ENCODE measurements at regions of chr14 and their contacts with region 1.

Region 1: GRCh38 chr14:103808403-103809001 is 38.9 kb downstream of the PPP1R13B start:
- DNase-seq: peak; percentile 74
- H3K4me3 ChIP-seq: no peak overlapping the region
- H3K27ac ChIP-seq: no peak overlapping the region
- H3K4me1 ChIP-seq: peaks cover 6% of the 10 kb centered on the region
- CTCF ChIP-seq: peak; percentile 95

Region 2: DNA sequence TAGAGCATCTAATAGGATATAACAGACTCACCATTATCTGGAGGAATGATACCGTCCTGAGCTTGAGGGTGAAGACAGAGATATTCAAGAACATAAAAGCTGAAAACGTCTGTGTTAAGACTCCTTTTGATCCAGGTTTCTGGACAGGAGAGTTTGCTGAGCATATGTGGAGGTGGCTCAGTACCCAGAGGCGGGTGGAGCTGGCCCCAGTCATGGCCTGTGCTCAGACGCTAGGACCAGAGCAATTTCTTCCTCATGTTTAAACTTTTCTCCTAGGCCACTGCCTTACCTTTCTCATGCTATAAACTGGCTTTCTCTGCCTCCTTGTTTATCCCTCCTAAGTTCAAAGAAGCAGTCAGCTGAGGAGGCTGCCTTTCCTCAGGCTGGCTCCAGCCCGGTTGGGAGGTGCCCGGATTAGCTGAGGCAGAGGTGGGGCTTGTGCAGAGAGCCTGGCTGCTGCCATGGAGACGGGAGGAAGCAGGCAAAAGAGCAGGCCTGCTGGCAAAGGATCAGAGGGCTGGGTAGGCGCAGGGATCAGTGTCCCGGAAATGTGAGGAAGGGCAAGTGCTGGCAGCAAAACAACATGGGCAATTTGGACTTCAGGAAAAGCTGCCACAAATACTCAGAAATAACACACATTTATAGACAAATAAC is 232.0 kb before region 1 on chr14:
- CTCF ChIA-PET with region 1: no interaction called
- POLR2A ChIA-PET with region 1: no interaction called
- intact Hi-C with region 1: loop called (anchors 5 kb)
- DNase-seq: no peak
- H3K4me3 ChIP-seq: no peak overlapping the region
- H3K27ac ChIP-seq: no peak overlapping the region
- H3K4me1 ChIP-seq: no peaks in the 10 kb centered on the region
- CTCF ChIP-seq: no peak

Region 3: DNA sequence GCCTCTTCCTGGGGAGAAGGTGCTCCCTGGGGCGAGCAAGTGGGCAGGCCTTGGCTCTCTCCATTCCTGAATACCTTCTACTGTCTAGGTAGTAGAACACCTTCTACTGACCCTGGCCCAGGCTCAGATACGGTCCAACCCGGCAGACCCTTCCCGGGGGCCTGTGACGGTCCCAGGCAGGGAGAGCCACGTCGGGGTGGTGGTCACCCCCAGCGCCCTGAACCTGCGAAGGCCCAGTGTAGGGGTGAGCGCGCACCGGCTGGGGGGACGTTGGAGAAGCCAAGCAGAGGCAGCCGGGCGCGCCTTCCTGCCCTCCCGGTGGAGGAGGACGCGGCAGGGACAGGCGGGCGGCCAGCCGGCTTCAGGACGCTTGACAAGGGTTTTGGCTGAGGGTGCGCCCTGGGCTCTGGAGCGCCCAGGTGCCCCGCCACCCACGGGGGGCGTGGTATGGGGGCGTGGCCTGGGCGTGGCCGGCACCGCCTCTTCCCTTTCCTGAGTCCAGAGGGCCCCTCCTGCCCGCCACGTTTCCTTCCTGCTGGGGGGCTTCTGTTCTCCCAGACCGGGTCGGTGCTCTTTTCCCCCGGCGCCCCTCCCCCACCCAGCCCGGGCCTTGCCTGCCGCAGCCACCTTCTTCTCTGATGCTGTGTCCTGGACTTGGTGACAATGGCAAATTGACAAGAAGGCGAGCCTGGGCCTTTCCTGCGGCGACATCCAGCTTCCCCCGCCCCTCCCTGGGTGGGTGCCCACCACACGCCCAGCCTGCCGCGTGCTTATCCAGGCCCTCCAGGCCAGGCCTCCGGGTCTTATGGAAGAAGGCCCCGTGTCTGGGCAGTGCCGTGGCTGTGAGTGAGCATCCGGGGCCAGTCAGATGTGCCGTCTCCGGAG is 63.3 kb after region 1 on chr14:
- CTCF ChIA-PET with region 1: no interaction called
- POLR2A ChIA-PET with region 1: no interaction called
- intact Hi-C with region 1: no loop called
- DNase-seq: peak; percentile 80
- H3K4me3 ChIP-seq: peak overlapping the region; percentile 76
- H3K27ac ChIP-seq: no peak overlapping the region
- H3K4me1 ChIP-seq: peaks cover 14% of the 10 kb centered on the region
- CTCF ChIP-seq: no peak

Region 4: GRCh38 chr14:103910262-103910935 is 101.9 kb after region 1 on chr14:
- CTCF ChIA-PET with region 1: no interaction called
- POLR2A ChIA-PET with region 1: no interaction called
- intact Hi-C with region 1: loop called (anchors 1 kb)
- DNase-seq: peak; percentile 68
- H3K4me3 ChIP-seq: no peak overlapping the region
- H3K27ac ChIP-seq: no peak overlapping the region
- H3K4me1 ChIP-seq: peaks cover 8% of the 10 kb centered on the region
- CTCF ChIP-seq: peak; percentile 92

Region 5: GRCh38 chr14:103973354-103973753 is 164.9 kb after region 1 on chr14:
- CTCF ChIA-PET with region 1: no interaction called
- POLR2A ChIA-PET with region 1: no interaction called
- intact Hi-C with region 1: no loop called
- DNase-seq: no peak
- H3K4me3 ChIP-seq: no peak overlapping the region
- H3K27ac ChIP-seq: no peak overlapping the region
- H3K4me1 ChIP-seq: no peaks in the 10 kb centered on the region
- CTCF ChIP-seq: no peak

Region 6: GRCh38 chr14:103984196-103984595 is 175.7 kb after region 1 on chr14:
- CTCF ChIA-PET with region 1: no interaction called
- POLR2A ChIA-PET with region 1: no interaction called
- intact Hi-C with region 1: loop called (anchors 1 kb)
- DNase-seq: no peak
- H3K4me3 ChIP-seq: no peak overlapping the region
- H3K27ac ChIP-seq: no peak overlapping the region
- H3K4me1 ChIP-seq: no peaks in the 10 kb centered on the region
- CTCF ChIP-seq: no peak

Region 7: DNA sequence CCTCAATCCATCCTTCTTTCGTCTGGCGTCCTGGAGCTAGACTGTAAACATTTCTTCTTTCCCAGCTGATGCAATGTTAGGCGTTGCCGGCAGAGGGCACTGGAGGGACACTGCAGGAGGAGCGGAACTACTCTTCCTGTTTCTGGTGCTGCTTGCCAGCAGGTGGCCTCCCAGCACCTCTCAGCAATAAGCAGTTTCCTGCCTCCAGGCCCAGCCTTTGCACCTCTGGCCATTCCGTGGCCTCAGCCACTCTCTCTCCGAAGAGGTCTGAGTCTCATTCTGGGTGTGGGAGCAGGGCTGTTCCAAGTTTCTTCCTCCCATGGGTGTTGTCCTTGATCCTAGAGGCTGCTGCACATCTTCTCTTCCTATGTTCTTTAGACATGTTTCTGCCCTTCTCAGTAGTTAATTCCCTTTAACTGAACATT is 269.5 kb after region 1 on chr14:
- CTCF ChIA-PET with region 1: no interaction called
- POLR2A ChIA-PET with region 1: no interaction called
- intact Hi-C with region 1: loop called (anchors 5 kb)
- DNase-seq: peak; percentile 92
- H3K4me3 ChIP-seq: no peak overlapping the region
- H3K27ac ChIP-seq: no peak overlapping the region
- H3K4me1 ChIP-seq: peaks cover 5% of the 10 kb centered on the region
- CTCF ChIP-seq: peak; percentile 100